Common myeloid progenitor, CD34-positive (primary cell): ENCODE measurements at regions of chr5 and their contacts with region 1.

Region 1: DNA sequence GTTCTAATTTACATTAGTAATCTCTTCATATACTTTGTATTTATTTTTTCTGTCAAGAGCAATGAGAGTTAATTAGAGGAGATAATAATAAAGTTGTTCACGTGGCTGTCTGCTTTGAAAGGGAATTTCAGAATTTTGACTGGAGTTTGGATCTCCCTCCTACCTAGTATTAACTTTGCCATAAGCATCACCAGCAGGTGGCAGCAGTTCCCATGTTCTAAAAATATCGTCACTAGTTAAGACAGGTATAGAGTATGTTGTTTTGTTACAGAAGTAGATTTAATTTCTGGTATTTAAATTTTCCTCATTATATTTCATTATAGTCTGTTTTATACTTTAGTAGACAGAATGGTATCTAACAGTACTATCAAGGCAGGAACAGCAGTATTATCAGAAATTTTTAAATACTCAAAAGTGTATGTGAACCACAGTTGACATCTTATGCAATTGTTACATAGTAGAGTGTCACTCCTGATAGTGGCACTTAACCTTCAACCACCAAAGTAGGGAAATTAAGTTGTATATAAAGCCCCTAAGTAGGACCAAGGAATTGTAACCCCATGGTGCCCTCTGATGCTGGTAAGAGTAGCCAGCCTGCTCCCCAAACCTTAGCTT is 20.4 kb downstream of the GNPDA1 start:
- DNase-seq: peak; percentile 68 to 83 (median 72)
- H3K4me3 ChIP-seq: no peak overlapping the region
- H3K27ac ChIP-seq: no peak overlapping the region
- H3K4me1 ChIP-seq: no peaks in the 10 kb centered on the region
- H3K27me3 ChIP-seq: no peaks in the 10 kb centered on the region

Region 2: DNA sequence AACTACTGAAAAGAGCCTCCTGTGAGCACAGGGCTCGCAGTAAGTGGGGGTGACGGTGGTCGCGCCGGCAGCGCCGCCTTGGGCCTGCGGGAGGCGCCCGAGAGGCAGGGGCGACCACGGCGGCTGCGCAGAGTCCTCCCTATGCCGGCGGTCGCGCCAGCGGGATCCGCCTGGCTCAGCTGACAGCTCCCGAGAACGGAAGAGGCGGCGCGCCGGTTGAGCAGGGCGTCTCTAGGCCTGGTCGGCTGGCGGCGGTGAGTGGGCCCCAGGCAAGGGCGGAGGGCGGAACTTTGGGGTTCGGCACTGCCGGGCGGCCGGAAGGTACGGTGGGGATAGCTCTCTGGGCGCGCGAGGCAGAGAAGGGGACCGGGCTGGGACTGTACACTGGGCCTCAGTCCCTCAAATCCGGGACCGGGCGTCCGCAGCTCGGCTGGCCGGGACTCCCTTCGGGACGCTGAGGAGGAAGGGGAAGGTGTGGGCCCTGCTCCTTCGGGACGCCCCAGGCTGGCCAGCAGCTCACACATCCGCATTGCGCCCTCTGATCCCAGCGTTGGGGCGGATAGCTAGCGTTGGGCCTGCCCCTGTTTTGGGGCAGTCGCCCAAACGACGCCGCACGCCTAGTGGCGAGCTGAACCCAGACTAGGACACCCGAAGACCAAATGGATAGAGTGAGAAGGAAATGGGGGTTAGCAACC is 23.4 kb before region 1 on chr5 and contains the start of gene RNF14:
- CTCF ChIA-PET with region 1: interaction called, 22 read pairs
- POLR2A ChIA-PET with region 1: interaction called, 3 read pairs
- DNase-seq: peak; percentile 95 to 98 (median 97)
- H3K4me3 ChIP-seq: peak within 1 kb of the TSS; percentile 60 to 91 (median 83)
- H3K27ac ChIP-seq: peak within 1 kb of the TSS; percentile 83 to 95
- H3K4me1 ChIP-seq: peaks cover 13 to 27% (median 20%) of the 10 kb centered on the region in 4 experiments
- H3K27me3 ChIP-seq: no peaks in the 10 kb centered on the region

Region 3: DNA sequence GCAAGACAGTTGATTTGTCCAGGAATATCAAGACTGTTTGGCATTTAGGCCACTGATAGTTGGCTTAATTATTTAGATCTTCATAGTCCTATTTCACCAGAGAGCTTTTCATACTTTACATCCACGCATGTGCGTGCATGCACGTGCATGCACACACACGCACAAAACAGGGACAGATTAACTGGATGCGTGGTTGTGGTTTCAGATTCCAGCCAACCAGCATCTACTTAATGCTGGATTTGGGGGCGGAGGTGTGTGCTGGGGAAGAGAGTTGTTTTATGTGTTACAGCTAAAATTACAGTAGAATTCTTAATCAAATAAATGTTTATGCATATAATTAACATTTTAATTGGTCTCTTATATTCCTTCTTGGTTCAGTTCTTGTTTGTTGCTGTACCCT is 16.3 kb before region 1 on chr5:
- CTCF ChIA-PET with region 1: interaction called, 17 read pairs
- POLR2A ChIA-PET with region 1: no interaction called
- DNase-seq: no peak
- H3K4me3 ChIP-seq: no peak overlapping the region
- H3K27ac ChIP-seq: no peak overlapping the region
- H3K4me1 ChIP-seq: no peaks in the 10 kb centered on the region
- H3K27me3 ChIP-seq: no peaks in the 10 kb centered on the region

Region 4: DNA sequence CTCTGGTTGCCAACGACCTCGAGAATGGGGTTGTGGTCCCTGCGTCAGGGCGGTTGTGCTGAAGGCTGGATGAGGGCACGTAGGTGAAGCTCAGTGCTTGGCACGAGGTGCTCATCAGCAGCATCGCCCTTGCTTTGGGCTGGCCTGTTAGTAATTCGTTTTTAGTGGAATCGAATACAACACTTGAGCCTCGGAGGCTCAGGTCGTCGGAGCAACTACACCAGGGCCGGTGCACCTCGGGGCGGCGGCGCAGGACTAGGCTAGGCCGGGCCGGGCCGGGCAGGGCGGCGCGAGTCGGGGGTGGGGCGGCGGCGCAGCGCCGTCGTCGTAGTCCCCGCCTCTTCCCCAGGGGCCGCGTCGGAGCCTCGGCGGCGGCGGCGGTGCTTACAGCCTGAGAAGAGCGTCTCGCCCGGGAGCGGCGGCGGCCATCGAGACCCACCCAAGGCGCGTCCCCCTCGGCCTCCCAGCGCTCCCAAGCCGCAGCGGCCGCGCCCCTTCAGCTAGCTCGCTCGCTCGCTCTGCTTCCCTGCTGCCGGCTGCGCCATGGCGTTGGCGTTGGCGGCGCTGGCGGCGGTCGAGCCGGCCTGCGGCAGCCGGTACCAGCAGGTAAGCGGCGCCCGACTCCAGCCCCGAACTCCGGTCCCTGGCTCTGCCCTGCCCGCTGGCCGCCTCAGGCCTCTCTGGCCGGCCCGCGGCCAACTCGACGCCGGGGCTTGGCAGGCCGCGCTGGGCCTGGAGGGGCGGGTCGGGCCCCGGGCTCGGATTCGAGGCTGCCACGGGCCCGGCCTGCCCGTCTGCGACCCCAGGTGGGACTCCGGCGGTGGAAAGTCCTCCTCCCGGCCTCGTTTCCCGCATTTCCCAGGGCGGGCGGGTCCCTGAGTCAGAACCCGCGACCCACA is 116.2 kb after region 1 on chr5 and contains the start of gene NDFIP1:
- CTCF ChIA-PET with region 1: no interaction called
- POLR2A ChIA-PET with region 1: no interaction called
- DNase-seq: peak; percentile 80 to 89 (median 81)
- H3K4me3 ChIP-seq: peak within 1 kb of the TSS; percentile 75 to 96 (median 91)
- H3K27ac ChIP-seq: peak within 1 kb of the TSS; percentile 67 to 88
- H3K4me1 ChIP-seq: peaks cover 4 to 35% (median 22%) of the 10 kb centered on the region in 4 experiments
- H3K27me3 ChIP-seq: no peaks in the 10 kb centered on the region